Posterior cingulate gyrus (tissue), 11 donors: ENCODE measurements at regions of chr10 and their contacts with region 1.

Region 1: GRCh38 chr10:122557516-122557915 is 3.0 kb upstream of the DMBT1 start:
- DNase-seq: no peak

Region 2: DNA sequence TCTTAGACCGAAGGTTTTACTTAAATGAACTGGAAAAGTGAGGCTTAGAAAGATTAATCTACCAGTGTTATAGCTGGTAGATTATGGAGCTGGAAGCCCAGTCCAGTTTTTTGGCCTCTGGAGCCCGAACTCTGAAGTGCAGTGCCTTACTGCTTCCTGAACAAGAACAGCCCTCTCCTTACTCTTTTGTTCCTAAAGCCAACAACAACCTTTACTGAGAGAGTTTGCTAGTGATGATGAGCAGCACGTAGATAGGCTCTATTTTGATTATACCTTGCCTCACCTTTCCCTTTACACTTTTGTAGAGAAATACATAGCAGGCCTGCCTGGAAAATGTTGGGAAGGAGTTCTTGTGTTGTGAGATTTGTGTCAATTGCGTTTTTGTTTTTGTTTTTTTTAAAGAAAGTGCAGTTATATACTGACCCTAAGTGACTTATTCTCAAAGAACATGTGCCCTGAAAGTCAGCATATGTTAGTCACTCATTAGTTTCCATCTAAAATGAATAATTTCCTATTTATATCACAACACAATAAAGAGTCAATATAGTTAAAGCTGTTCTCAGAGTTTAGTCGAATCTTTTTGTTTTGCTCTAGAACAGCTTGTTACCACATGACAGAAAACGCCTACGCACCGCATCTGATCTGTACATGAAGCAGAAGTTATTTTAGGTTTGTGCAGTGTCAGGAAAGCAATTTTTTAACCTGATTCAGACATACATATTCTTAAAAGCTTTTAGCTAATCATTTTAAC is 150.0 kb before region 1 on chr10:
- intact Hi-C with region 1: no loop called
- DNase-seq: peak in 3 of 10 donors; percentile 27 to 73 (median 68)

Region 3: GRCh38 chr10:122446668-122447423 is 110.7 kb before region 1 on chr10:
- intact Hi-C with region 1: loop called (anchors 5 kb)
- DNase-seq: no peak